ENCODE measurements at regions of chr6 and their contacts with region 1.

Region 1: DNA sequence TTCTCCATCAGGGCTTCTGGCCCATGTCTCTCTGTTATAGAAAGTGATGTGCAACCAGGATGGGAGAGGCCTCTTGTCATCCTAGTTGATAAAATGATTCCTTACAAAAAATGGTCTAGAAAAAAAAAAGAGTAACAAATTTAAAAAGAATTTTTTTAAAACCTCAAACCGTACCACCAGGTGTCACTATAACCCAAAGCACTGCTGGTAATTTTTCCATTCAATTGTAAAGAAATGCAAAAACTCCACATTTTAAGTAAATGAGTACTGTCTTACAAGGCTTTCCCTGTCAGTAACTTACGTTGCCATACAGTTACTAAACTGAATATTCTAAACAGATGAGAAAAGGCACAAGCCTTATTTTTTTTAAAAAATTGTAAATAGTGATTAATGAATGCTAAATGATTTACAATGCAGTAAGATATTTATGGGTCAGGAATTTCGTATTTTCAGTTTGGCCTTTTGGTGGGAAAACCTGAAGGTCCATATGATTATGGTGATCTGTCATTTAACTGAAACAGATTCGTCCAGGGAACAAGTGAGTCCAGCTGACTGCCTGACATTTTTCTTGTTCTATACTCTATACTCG is 95.4 kb downstream of the OGFRL1 start:
- DNase-seq: peak; percentile 12
- ATAC-seq: no peak
- H3K4me3 Mint-ChIP-seq: no peak overlapping the region
- H3K27ac Mint-ChIP-seq: no peak overlapping the region
- H3K4me1 Mint-ChIP-seq: no peaks in the 10 kb centered on the region
- H3K27me3 Mint-ChIP-seq: peaks cover 9% of the 10 kb centered on the region

Region 2: DNA sequence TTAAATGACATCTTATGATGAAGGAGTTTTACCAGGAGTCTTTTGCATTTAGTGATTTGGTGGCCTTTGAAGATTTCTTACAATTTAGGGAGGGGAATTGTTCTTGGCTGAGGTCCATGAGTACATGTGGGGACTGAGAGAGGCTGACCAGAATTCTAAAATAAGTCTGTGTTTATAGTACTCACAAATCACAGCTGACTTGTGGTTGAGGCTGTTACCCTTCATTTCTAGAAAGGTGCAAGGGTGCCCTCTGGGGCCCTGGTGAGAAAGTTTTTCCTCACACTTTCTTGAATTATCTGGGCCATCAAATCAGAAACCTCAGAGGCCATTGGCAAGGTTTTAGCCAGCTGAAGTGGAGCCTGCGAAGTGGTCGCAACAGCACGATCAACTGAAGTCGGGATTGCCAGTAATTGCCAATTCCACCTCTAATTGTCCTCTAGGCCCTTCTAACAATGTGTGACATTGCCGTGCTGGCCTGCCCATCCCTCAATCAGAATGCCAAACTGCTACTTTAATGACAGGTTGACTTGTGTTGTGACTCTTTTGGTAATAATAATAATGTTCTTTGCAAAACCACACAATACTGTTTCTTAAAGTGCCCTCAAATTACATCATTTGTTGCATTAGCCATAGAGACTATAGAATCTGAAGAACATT is 126.2 kb after region 1 on chr6:
- CTCF ChIA-PET with region 1: no interaction called
- POLR2A ChIA-PET with region 1: no interaction called
- intact Hi-C with region 1: loop called in 1 of 2 experiments (anchors 2 kb)
- DNase-seq: peak; percentile 12
- ATAC-seq: no peak
- H3K4me3 Mint-ChIP-seq: no peak overlapping the region
- H3K27ac Mint-ChIP-seq: no peak overlapping the region
- H3K4me1 Mint-ChIP-seq: no peaks in the 10 kb centered on the region
- H3K27me3 Mint-ChIP-seq: no peaks in the 10 kb centered on the region

Measured in activated CD4-positive, alpha-beta T cell treated with anti-CD3 and anti-CD28 coated beads for 36 hours (primary cell).